Cardiac septum (tissue), 1 donor: ENCODE measurements at regions of chr3 and their contacts with region 1.

Region 1: DNA sequence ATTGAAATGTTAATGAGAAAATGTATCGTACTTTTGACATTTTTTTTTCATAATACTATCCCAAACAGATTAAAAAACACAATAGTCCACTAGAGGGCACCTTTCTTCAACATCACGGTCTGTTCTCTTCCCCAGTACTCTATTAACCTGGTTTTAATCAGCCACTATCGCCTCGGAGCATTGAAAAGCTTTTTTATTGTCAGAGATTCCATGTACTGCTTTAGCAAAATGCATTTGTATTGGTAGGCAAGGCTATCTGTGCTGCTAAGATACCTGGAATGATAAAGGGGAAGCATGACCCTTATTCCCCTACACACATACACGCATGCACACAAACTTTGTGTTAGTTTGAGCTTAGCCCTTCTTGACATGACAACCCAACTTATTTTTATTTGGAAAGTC is 160.1 kb upstream of the IL12A start:
- DNase-seq: no peak

Region 2: GRCh38 chr3:159804726-159805410 is 23.7 kb before region 1 on chr3:
- intact Hi-C with region 1: no loop called
- DNase-seq: no peak

Region 3: DNA sequence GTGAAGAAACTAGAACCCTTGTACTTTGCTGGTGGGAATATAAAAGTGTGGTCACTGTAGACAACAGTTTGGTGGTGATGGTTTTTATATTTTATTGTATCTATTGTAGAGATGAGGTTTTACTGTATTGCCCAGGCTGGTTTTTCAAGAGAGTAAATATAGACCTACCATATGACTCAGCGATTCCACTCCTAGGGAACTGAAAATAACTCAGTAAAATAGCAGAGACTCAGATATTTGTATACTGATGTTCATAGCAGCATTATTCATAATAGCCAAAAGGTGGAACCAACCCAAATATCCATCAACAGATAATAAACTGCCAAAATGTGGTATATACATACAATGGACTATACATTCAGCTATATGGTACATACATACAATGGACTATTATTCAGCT is 91.3 kb after region 1 on chr3:
- intact Hi-C with region 1: no loop called
- DNase-seq: no peak

Region 4: GRCh38 chr3:160009525-160009924 is 181.0 kb after region 1 on chr3:
- intact Hi-C with region 1: loop called (anchors 2 kb)
- DNase-seq: no peak